GM23248 (cell line): ENCODE measurements at regions of chr3 and their contacts with region 1.

Region 1: DNA sequence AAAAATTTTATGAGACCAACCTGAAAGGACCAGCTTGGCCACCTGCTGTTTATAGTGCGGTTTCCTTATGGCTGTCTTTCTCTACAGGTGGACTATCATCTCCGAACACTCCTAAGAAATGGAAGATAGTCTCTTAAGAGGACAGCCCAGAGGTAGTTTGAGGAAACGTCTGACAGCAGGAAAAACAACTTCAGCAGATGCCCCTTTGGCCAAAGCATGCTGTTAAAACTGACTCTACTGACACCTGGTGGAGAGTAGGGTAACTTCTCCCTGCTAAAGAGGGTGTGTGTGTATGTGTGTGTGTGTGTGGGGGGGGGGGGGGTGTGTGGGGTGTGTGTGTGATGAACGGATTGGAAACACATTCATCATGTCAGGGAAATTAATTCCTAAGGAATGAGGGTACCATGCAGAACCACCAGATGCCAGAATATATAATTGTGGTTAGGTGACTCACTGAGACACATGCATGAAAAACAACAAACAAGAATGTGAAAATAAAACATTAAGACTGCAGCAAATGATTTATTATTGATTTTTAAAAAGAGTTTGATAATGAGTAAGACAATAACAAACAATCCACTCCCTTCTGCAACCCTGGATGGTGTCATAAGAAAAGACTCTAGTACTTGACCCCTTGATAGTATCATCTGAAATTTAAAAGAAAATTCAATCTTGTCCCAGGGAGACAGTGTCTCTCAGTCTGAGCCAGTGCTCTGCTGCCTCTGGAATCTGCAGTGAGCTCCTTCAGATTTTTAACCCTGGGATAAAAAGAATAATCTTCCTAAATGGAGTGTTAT is 256.5 kb downstream of the THRB start:
- DNase-seq: peak; percentile 92
- H3K4me3 ChIP-seq: 0 out of 2 replicates have a peak overlapping the region, but pooled peaks have one; percentile 6
- H3K27ac ChIP-seq: peak overlapping the region; percentile 83
- H3K4me1 ChIP-seq: peaks cover 37% of the 10 kb centered on the region
- H3K27me3 ChIP-seq: no peaks in the 10 kb centered on the region

Region 2: DNA sequence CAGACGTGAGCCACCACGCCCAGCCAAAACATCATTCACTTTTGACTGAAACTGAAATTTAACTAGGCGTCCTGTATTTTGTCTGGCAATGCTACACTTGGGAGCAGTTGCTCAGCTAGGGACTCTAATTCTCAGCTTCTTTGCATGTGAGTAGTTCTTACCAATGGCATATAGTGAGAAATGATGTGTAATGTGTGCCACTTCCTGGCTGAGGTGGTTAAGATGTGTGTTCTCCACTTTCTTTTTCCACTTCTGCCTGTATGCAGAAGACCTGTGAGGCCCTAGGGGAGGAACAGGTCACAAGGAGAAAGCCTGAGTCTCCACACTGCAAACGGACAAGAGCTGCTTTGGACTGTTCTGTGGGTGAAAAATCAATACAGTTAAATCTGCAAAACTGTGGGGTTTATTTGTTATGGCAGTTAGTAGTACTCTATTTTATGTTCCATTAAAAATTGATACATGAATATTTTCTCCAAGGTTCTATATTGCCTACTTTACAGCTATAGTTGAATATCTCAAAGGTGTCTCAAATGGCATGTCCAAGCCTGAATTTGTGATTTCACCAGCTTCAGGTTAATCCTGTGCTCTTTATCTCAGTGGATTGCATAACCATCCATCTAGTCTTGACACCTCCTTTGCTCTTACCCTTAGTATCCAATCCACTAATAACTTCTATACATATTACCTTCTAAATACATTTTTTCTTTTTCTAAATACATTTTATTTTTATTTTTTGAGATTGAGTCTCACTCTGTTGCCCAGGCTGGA is 233.8 kb before region 1 on chr3:
- in situ Hi-C with region 1: loop called (anchors 10 kb)
- DNase-seq: no peak
- H3K4me3 ChIP-seq: no peak overlapping the region
- H3K27ac ChIP-seq: no peak overlapping the region
- H3K4me1 ChIP-seq: peaks cover 6% of the 10 kb centered on the region; the same call in 1 of the 2 replicates
- H3K27me3 ChIP-seq: no peaks in the 10 kb centered on the region